AG04449 (cell line): ENCODE measurements at regions of chr2 and their contacts with region 1.

Region 1: DNA sequence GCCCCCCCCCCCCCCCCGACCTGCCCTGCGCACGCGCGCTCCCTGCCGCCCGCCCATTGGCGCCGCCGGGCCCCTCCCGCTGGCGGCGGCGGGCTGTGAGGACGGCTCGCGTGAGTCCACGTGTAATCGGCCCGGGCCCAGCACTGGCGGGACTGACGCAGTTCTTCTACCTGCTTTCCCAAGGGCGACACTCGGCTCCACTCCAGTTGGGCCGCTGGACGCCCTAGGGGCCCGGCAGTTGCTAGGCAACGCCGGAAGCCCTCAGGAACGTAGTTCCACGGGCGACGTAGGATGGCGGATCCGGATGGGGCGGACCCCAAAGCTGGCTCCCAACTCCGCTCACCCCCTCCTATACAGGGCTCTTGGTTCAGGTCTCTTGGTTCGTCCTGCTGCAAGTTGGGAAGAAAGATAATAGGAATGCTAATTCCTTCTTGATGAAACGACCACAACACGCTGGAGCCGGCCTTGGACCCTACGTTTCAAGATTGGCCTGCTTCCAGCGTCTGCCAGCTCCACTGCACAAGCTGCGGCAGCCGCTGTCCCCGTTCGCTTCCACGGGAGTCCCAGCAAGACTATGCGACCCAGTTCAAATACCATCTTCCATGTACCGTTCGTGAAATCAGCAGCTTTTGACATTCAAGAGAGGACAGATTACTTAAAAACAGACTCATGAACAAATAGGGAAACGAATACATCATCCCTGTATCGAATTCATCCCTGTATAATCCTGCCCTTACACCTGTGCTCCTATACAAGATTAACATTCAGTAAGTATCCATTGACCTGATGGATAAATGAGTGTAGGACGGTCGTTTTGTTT is 415 bp upstream of the MCFD2 start:
- DNase-seq: peak; percentile 45
- H3K4me3 ChIP-seq: peak overlapping the region; percentile 93
- CTCF ChIP-seq: no peak

Region 2: GRCh38 chr2:46841621-46842020 is 74.4 kb before region 1 on chr2:
- CTCF ChIA-PET with region 1: no interaction called
- POLR2A ChIA-PET with region 1: no interaction called
- DNase-seq: no peak
- H3K4me3 ChIP-seq: no peak overlapping the region
- CTCF ChIP-seq: no peak

Region 3: DNA sequence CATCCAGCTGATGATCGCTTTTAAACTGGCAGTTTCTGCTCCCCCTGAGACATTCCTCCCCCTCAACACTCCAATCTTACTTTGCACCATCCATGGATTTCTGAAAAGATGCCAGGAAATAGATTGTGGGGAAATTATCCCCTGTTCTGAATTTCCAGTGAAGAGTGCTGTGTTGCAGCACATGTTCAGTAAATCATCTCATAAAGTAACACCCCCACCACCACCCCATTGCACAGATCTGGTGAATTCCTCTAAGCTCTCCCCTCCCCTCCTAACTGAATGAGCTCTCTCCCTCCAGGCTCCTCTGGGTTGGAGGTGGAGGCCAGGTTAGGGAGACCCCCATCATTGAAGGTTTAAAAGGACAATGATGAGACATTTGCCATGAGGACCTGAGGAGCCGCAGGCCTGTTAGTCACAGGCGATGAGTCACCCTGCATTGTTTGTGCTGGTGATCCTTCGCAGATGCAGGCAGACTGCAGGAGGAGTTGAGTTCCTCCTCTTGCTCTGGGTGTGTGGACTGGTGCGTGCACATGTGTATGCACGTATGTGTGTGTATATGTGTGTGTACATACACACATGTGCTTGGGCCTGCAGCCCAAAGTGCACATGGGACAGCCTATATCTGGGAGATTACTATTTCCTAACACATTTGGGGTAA is 42.5 kb before region 1 on chr2:
- CTCF ChIA-PET with region 1: no interaction called
- POLR2A ChIA-PET with region 1: no interaction called
- DNase-seq: peak; percentile 82
- H3K4me3 ChIP-seq: no peak overlapping the region
- CTCF ChIP-seq: no peak

Region 4: DNA sequence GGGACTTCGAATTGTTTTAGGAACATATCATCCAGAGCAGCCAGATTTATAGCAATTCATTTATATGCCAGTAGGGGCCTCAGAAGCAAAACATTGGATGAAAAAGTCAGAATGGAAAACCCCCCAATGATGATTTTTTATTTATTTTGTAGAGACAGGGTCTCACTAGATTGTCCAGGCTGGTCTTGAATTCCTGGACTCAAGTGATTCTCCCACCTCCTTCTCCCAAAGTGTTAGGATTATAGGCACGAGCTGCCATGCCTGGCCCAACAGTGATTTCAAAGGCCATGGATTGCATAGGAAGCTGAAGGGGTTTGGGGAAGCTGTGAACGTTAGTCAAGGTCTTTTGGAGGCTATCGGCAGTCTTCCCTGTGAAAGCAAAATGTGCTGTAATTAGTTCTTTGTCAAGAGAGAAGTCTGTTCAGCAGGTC is 21.5 kb after region 1 on chr2:
- CTCF ChIA-PET with region 1: interaction called, 16 read pairs
- POLR2A ChIA-PET with region 1: no interaction called
- DNase-seq: no peak
- H3K4me3 ChIP-seq: no peak overlapping the region
- CTCF ChIP-seq: peak; percentile 5